Posterior vena cava (tissue), 2 donors: ENCODE measurements at regions of chr6 and their contacts with region 1.

Region 1: DNA sequence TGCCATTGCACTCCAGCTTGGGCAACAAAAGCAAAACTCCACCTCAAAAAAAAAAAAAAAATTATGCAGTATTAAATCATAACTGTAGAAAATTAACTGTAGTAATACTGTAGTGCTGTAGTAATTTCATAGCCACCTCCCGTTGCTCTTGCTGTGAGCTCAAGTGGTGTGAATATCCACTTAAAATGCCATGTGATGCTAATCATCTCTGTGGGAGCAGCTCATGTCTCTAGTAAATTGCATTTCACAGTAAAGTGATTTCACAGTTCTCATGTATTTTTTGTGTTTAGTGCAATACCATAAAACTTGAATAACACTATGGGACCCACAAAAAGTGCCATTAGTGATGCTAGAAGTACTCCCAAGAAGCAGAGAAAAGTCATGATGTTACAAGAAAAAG is 14.4 kb upstream of the FAM217A start:
- DNase-seq: no peak

Region 2: GRCh38 chr6:3712827-3713665 is 380.2 kb before region 1 on chr6:
- intact Hi-C with region 1: no loop called
- DNase-seq: no peak

Region 3: GRCh38 chr6:4036581-4036980 is 56.7 kb before region 1 on chr6:
- intact Hi-C with region 1: loop called in 1 of 2 experiments (anchors 2 kb)
- DNase-seq: no peak

Region 4: GRCh38 chr6:4066029-4066755 is 27.1 kb before region 1 on chr6:
- intact Hi-C with region 1: no loop called
- DNase-seq: no peak